CD8-positive, alpha-beta T cell (primary cell): ENCODE measurements at regions of chr6 and their contacts with region 1.

Region 1: GRCh38 chr6:41683510-41684310 is 45.4 kb downstream of the MDFI start:
- DNase-seq: peak; percentile 70 to 88 (median 79)
- ATAC-seq: peak; percentile 91
- H3K4me3 ChIP-seq: peak overlapping the region; percentile 35 to 47
- H3K4me3 Mint-ChIP-seq: peak overlapping the region; percentile 77
- H3K27ac ChIP-seq: peak overlapping the region; percentile 39 to 48
- H3K27ac Mint-ChIP-seq: peak overlapping the region; percentile 76
- H3K4me1 ChIP-seq: peaks cover 3% of the 10 kb centered on the region
- H3K4me1 Mint-ChIP-seq: peaks cover 8% of the 10 kb centered on the region
- H3K27me3 ChIP-seq: peaks cover 0 to 2% of the 10 kb centered on the region in 2 experiments
- H3K27me3 Mint-ChIP-seq: peaks cover 1% of the 10 kb centered on the region
- CTCF ChIP-seq: peak; percentile 76

Region 2: DNA sequence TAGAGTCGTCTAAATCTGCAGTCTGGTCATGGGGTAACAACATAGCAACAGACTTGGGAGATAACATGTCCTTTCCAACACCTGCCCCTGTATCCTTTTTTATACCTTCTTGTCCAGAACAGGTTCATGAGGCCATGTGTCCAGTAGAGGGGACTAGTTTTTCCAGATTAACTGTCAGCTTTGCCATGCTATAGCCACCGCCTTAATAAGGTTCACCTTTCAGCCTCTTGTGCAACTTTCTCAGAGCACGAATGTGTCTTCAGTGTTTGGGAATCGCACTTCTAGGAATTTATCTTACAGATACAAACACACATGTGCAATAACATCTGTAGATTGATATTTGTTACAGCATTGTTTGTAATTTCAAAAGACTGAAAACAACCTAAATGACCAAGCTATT is 326.9 kb before region 1 on chr6:
- CTCF ChIA-PET with region 1: no interaction called
- POLR2A ChIA-PET with region 1: no interaction called
- intact Hi-C with region 1: no loop called
- DNase-seq: peak in 1 of 9 experiments; percentile 21
- ATAC-seq: no peak
- H3K4me3 ChIP-seq: no peak overlapping the region
- H3K4me3 Mint-ChIP-seq: no peak overlapping the region
- H3K27ac ChIP-seq: no peak overlapping the region
- H3K27ac Mint-ChIP-seq: no peak overlapping the region
- H3K4me1 ChIP-seq: no peaks in the 10 kb centered on the region
- H3K4me1 Mint-ChIP-seq: no peaks in the 10 kb centered on the region
- H3K27me3 ChIP-seq: no peaks in the 10 kb centered on the region
- H3K27me3 Mint-ChIP-seq: peaks cover 3% of the 10 kb centered on the region
- CTCF ChIP-seq: no peak

Region 3: DNA sequence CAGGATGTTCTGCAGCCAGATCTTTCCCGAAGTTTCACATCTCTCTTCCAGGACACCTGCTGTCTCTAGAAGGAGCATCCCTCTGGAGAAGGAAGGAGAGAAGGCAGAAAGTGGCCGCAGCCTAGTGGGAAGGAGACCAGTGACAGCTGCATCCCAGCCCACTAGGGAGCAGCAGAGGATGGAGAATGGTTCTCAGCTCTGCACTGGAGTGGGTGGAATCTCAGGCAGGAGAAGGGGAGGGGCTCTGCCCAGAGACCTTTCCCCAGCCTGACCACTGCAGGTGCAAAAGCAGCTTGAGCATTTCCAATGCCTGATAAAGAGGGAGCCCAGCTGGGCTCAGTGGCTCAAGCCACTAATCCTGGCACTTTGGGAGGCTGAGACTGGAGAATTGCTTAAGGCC is 316.0 kb before region 1 on chr6:
- CTCF ChIA-PET with region 1: interaction called, 34 read pairs
- POLR2A ChIA-PET with region 1: no interaction called
- intact Hi-C with region 1: loop called in 1 of 2 experiments (anchors 1 kb)
- DNase-seq: peak in 1 of 9 experiments; percentile 42
- ATAC-seq: no peak
- H3K4me3 ChIP-seq: no peak overlapping the region
- H3K4me3 Mint-ChIP-seq: no peak overlapping the region
- H3K27ac ChIP-seq: no peak overlapping the region
- H3K27ac Mint-ChIP-seq: no peak overlapping the region
- H3K4me1 ChIP-seq: peaks cover 16% of the 10 kb centered on the region
- H3K4me1 Mint-ChIP-seq: peaks cover 24% of the 10 kb centered on the region
- H3K27me3 ChIP-seq: peaks cover 21 to 35% of the 10 kb centered on the region in 2 experiments
- H3K27me3 Mint-ChIP-seq: peaks cover 25% of the 10 kb centered on the region
- CTCF ChIP-seq: no peak

Region 4: DNA sequence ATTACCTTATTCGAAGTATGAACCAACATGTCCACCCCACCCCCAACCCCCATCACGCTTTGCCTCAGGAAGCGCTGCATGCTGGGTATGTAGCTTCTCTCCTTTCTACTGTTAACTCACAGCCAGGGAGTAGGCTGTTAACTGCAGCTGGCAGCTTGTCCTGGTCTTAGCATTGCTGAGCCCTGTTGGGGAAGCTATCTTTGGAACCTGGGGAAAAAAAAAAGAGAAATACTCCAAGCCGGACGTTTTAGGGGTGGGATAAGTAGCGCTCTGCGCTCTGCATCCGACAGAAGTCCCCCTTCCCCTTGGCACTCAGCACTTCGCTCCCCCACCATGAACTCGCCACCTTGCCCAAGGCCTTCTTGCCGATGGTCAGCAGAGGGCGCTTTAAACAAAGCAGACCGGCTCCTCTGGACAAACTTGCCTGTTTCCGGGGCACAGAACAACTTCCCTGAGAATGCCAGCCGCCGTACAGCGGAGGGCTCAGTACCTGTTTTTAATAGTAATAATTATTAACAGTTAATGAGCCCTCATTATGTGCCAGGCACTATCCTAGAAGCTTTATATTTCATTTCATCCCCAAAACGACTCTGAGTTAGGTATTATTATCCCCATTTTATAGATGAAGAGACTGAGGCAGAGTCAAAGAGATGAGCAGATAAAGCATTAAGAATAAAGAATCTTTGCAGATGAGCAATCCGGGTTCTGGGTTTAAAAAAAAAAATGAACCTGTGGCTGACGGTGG is 80.7 kb before region 1 on chr6:
- CTCF ChIA-PET with region 1: interaction called, 90 read pairs
- POLR2A ChIA-PET with region 1: interaction called, 6 read pairs
- intact Hi-C with region 1: loop called in 1 of 2 experiments (anchors 1 kb)
- DNase-seq: peak; percentile 45 to 87 (median 74)
- ATAC-seq: peak; percentile 81
- H3K4me3 ChIP-seq: no peak overlapping the region
- H3K4me3 Mint-ChIP-seq: no peak overlapping the region
- H3K27ac ChIP-seq: no peak overlapping the region
- H3K27ac Mint-ChIP-seq: no peak overlapping the region
- H3K4me1 ChIP-seq: no peaks in the 10 kb centered on the region
- H3K4me1 Mint-ChIP-seq: peaks cover 5% of the 10 kb centered on the region
- H3K27me3 ChIP-seq: peaks cover 0 to 4% of the 10 kb centered on the region in 2 experiments
- H3K27me3 Mint-ChIP-seq: peaks cover 12% of the 10 kb centered on the region
- CTCF ChIP-seq: peak; percentile 62

Region 5: GRCh38 chr6:41705996-41706835 is 22.5 kb after region 1 on chr6:
- CTCF ChIA-PET with region 1: interaction called, 19 read pairs
- POLR2A ChIA-PET with region 1: no interaction called
- intact Hi-C with region 1: no loop called
- DNase-seq: peak; percentile 15 to 83 (median 55)
- ATAC-seq: peak; percentile 70
- H3K4me3 ChIP-seq: no peak overlapping the region
- H3K4me3 Mint-ChIP-seq: no peak overlapping the region
- H3K27ac ChIP-seq: peak overlapping the region in 1 of 2 experiments; percentile 77
- H3K27ac Mint-ChIP-seq: peak overlapping the region; percentile 64
- H3K4me1 ChIP-seq: peaks cover 31% of the 10 kb centered on the region
- H3K4me1 Mint-ChIP-seq: peaks cover 28% of the 10 kb centered on the region
- H3K27me3 ChIP-seq: no peaks in the 10 kb centered on the region
- H3K27me3 Mint-ChIP-seq: no peaks in the 10 kb centered on the region
- CTCF ChIP-seq: peak; percentile 32

Region 6: DNA sequence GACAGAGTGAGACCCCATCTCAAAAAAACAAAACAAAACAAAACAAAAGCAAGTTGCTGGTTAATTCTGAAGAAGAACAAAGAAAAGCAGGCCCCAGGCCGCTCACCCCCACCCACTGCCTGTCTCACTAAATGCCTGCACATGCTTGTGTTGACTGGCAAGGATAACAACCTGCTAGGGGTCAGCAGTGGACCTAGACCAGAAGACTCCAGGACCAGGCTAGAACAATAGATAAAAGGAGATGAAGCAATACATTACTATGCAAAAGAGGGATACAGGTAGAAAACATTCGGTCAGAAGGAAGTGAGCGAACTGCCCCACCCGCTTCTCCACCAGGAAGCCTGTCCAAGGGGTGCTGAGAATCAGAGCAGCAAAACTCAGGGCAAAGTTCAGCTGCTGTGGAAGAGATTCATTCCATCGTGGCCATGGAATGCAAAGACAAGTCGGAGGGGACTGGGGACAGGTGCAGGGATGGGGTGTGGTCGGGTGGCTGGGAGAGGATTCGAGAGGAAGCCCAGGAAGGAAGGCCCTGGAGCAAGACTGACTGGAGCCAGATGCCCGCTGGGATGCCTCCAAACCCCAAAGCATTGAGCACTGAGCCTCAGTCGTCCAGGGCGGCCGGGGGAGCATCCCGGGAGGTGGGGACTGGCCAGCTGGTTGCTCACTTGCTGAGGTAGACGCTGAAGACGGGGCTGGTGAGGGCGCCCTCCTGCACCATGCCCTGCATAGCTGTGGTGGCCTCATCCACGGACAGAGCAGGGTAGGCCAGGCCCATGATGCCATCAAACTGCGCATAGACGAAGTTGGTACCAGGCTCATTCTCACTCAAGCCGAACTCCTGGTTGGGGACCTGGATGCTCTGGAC is 58.1 kb after region 1 on chr6:
- CTCF ChIA-PET with region 1: no interaction called
- POLR2A ChIA-PET with region 1: no interaction called
- intact Hi-C with region 1: no loop called
- DNase-seq: no peak
- ATAC-seq: no peak
- H3K4me3 ChIP-seq: no peak overlapping the region
- H3K4me3 Mint-ChIP-seq: no peak overlapping the region
- H3K27ac ChIP-seq: no peak overlapping the region
- H3K27ac Mint-ChIP-seq: no peak overlapping the region
- H3K4me1 ChIP-seq: no peaks in the 10 kb centered on the region
- H3K4me1 Mint-ChIP-seq: no peaks in the 10 kb centered on the region
- H3K27me3 ChIP-seq: no peaks in the 10 kb centered on the region
- H3K27me3 Mint-ChIP-seq: no peaks in the 10 kb centered on the region
- CTCF ChIP-seq: no peak